CD4-positive, alpha-beta memory T cell (primary cell): ENCODE measurements at regions of chr5 and their contacts with region 1.

Region 1: DNA sequence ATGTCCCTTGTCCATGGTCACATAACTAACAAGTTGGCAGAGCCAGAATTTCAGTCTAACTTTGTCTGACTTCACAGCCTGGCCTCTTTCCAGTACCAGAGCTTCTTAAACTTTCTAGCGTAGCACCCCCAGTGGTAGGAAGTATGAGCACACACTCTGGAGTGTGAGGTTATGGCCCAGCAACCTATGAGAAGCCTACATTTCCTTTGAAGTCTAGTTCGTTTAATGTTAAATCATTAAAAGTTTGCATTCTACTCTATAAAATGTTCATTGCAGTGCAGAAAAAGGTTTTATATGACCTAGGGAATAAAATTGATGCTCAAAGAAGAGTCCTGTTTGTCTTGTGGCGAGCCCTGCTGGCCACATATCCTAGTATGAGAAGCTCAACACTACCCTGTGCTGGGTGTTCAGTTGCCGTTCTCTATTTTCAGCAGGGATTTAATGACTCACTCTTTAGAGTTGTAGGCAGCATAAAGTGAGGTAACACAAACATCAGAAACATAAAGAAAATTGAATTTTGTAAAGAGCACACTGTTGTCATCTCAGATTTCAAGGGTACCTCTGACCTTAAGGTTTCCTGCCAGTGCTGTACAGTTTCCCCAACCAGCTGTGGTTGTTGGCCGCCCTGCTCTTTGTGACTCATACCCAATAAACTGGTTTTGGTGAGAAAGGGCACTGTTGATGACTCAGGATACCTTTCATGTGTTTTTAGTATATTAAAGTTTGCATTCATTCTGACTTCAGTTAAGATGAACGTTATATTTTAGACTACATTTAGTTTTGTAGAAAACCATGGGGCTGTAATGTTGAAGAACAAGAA is 14.3 kb downstream of the MCCC2 start:
- DNase-seq: peak; percentile 58 to 91 (median 64)
- H3K4me3 ChIP-seq: no peak overlapping the region
- H3K4me3 Mint-ChIP-seq: peak overlapping the region in 7 of 8 donors; percentile 17 to 73 (median 43)
- H3K27ac ChIP-seq: peak overlapping the region; percentile 53
- H3K27ac Mint-ChIP-seq: peak overlapping the region; percentile 54 to 91 (median 87)
- H3K4me1 ChIP-seq: peaks cover 30% of the 10 kb centered on the region
- H3K4me1 Mint-ChIP-seq: peaks cover 20 to 33% (median 25%) of the 10 kb centered on the region in 4 donors
- H3K27me3 ChIP-seq: no peaks in the 10 kb centered on the region
- H3K27me3 Mint-ChIP-seq: no peaks in the 10 kb centered on the region

Region 2: GRCh38 chr5:71455427-71456361 is 145.7 kb before region 1 on chr5 and contains the start of gene BDP1:
- CTCF ChIA-PET with region 1: interaction called, 3 read pairs
- POLR2A ChIA-PET with region 1: interaction called, 6 read pairs
- intact Hi-C with region 1: loop called (anchors 1 kb)
- DNase-seq: peak; percentile 96 to 98 (median 97)
- H3K4me3 ChIP-seq: peak within 1 kb of the TSS; percentile 93 to 96
- H3K4me3 Mint-ChIP-seq: peak within 1 kb of the TSS; percentile 96 to 100 (median 98)
- H3K27ac ChIP-seq: peak within 1 kb of the TSS; percentile 84
- H3K27ac Mint-ChIP-seq: peak within 1 kb of the TSS; percentile 93 to 100 (median 99)
- H3K4me1 ChIP-seq: peaks cover 23% of the 10 kb centered on the region
- H3K4me1 Mint-ChIP-seq: peaks cover 21 to 36% (median 30%) of the 10 kb centered on the region in 4 donors
- H3K27me3 ChIP-seq: peaks cover 5% of the 10 kb centered on the region
- H3K27me3 Mint-ChIP-seq: peaks cover 5 to 7% of the 10 kb centered on the region in 2 donors
- total RNA-seq, gene BDP1: 45.1 to 47.9 TPM

Region 3: GRCh38 chr5:71475788-71476384 is 125.5 kb before region 1 on chr5:
- CTCF ChIA-PET with region 1: interaction called, 6 read pairs
- POLR2A ChIA-PET with region 1: no interaction called
- intact Hi-C with region 1: loop called (anchors 5 kb)
- DNase-seq: peak in 3 of 5 donors; percentile 9 to 16 (median 16)
- H3K4me3 ChIP-seq: no peak overlapping the region
- H3K4me3 Mint-ChIP-seq: no peak overlapping the region
- H3K27ac ChIP-seq: no peak overlapping the region
- H3K27ac Mint-ChIP-seq: peak overlapping the region in 3 of 7 donors; percentile 12 to 53 (median 17)
- H3K4me1 ChIP-seq: no peaks in the 10 kb centered on the region
- H3K4me1 Mint-ChIP-seq: peaks cover 0 to 6% (median 3%) of the 10 kb centered on the region in 4 donors
- H3K27me3 ChIP-seq: no peaks in the 10 kb centered on the region
- H3K27me3 Mint-ChIP-seq: no peaks in the 10 kb centered on the region

Region 4: GRCh38 chr5:71586941-71587765 is 14.3 kb before region 1 on chr5 and contains the start of gene MCCC2:
- CTCF ChIA-PET with region 1: interaction called, 32 read pairs
- POLR2A ChIA-PET with region 1: interaction called, 52 read pairs
- intact Hi-C with region 1: loop called (anchors 1 kb)
- DNase-seq: peak; percentile 95 to 97 (median 95)
- H3K4me3 ChIP-seq: peak within 1 kb of the TSS; percentile 83 to 92
- H3K4me3 Mint-ChIP-seq: peak within 1 kb of the TSS; percentile 90 to 100 (median 98)
- H3K27ac ChIP-seq: peak within 1 kb of the TSS; percentile 87
- H3K27ac Mint-ChIP-seq: peak within 1 kb of the TSS; percentile 90 to 100 (median 99)
- H3K4me1 ChIP-seq: peaks cover 43% of the 10 kb centered on the region
- H3K4me1 Mint-ChIP-seq: peaks cover 29 to 48% (median 40%) of the 10 kb centered on the region in 4 donors
- H3K27me3 ChIP-seq: no peaks in the 10 kb centered on the region
- H3K27me3 Mint-ChIP-seq: no peaks in the 10 kb centered on the region
- total RNA-seq, gene MCCC2: 31.1 to 31.9 TPM

Region 5: DNA sequence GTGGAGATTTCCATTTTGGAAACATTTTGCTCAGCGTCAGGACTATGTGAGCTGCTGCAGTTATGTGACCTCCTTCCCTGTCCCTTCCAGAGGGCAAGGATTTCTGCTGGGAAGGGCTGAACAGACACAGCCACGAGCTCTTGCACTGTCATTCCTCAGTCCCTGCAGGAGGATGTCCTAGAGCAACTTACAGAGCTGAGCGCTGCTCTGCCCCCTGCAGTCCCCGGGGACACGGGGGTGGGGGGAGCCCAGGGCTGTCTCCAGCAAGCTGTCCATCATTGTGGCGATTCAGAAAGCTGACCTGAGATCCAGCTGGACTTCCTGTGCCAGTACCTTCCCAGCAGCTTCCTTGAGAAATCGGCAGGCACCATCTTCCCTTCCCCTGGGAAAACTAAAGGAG is 477.9 kb after region 1 on chr5:
- CTCF ChIA-PET with region 1: no interaction called
- POLR2A ChIA-PET with region 1: no interaction called
- intact Hi-C with region 1: no loop called
- DNase-seq: no peak
- H3K4me3 ChIP-seq: no peak overlapping the region
- H3K4me3 Mint-ChIP-seq: no peak overlapping the region
- H3K27ac ChIP-seq: no peak overlapping the region
- H3K27ac Mint-ChIP-seq: no peak overlapping the region
- H3K4me1 ChIP-seq: no peaks in the 10 kb centered on the region
- H3K4me1 Mint-ChIP-seq: no peaks in the 10 kb centered on the region
- H3K27me3 ChIP-seq: no peaks in the 10 kb centered on the region
- H3K27me3 Mint-ChIP-seq: peaks cover 21 to 36% of the 10 kb centered on the region in 2 donors

Region 6: GRCh38 chr5:72955768-72956323 is 1354.4 kb after region 1 on chr5 and contains the start of gene FCHO2:
- CTCF ChIA-PET with region 1: no interaction called
- POLR2A ChIA-PET with region 1: no interaction called
- intact Hi-C with region 1: loop called (anchors 5 kb)
- DNase-seq: peak; percentile 92 to 95 (median 93)
- H3K4me3 ChIP-seq: peak within 1 kb of the TSS; percentile 85 to 96
- H3K4me3 Mint-ChIP-seq: peak within 1 kb of the TSS; percentile 90 to 99 (median 94)
- H3K27ac ChIP-seq: peak within 1 kb of the TSS; percentile 29
- H3K27ac Mint-ChIP-seq: peak within 1 kb of the TSS; percentile 85 to 91 (median 87)
- H3K4me1 ChIP-seq: peaks cover 15% of the 10 kb centered on the region
- H3K4me1 Mint-ChIP-seq: peaks cover 13 to 19% (median 13%) of the 10 kb centered on the region in 4 donors
- H3K27me3 ChIP-seq: no peaks in the 10 kb centered on the region
- H3K27me3 Mint-ChIP-seq: peaks cover 14 to 34% of the 10 kb centered on the region in 2 donors
- total RNA-seq, gene FCHO2: 6.1 to 6.3 TPM